Posterior vena cava (tissue), 2 donors: ENCODE measurements at regions of chr12 and their contacts with region 1.

Region 1: GRCh38 chr12:10212201-10213131 is at the start of gene GABARAPL1:
- DNase-seq: peak; percentile 99
- total RNA-seq, gene GABARAPL1: 73.5 to 77.0 TPM

Region 2: DNA sequence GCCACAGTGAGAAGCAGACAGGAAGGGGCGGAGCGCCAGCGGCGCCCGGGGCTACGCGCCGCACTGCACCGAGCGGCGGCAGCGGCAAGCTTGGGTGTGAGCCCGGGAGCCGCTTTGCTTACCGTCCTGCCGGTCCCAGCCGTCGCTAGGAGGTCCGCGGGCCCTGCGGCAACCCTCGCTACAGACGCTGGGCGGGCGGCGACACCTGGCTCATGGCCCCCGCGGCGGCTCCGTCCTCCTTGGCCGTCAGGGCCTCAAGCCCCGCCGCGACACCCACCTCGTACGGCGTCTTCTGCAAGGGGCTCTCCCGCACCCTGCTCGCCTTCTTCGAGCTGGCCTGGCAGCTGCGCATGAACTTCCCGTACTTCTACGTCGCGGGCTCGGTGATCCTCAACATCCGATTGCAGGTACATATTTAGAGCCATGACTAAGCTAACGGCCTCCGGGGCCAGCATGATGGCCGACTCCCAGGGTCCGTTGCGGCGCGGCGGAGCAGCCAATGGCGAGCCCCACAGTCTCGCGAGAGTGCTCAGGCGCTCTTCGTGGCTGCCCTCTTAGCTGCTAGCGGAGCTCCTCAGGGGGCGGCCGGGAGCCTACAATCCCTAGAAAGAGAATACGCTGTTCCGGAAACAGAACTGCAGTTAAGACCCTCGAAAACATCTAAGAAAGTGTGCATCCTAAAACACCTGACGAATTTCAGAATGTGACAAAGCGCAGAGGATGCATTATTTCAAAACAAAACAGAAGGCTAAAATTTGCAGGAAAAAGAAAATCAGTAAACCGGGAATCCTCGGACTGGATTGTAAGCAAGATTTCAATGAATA is 958.9 kb after region 1 on chr12 and contains the start of gene SMIM10L1:
- intact Hi-C with region 1: loop called in 1 of 2 experiments (anchors 10 kb)
- DNase-seq: peak; percentile 98
- total RNA-seq, gene SMIM10L1: 15.1 to 15.3 TPM